Panc1 (cell line): ENCODE measurements at regions of chrX and their contacts with region 1.

Region 1: GRCh38 chrX:129654419-129655165 is at the start of gene APLN:
- DNase-seq: no peak
- ATAC-seq: peak; percentile 82
- H3K4me3 ChIP-seq: peak within 1 kb of the TSS; percentile 46 to 58
- H3K27ac ChIP-seq: no peak within 1 kb of the TSS
- H3K4me1 ChIP-seq: peaks cover 8% of the 10 kb centered on the region
- H3K27me3 ChIP-seq: no peaks in the 10 kb centered on the region
- CTCF ChIP-seq: no peak
- total RNA-seq, gene APLN: 1.1 TPM

Region 2: DNA sequence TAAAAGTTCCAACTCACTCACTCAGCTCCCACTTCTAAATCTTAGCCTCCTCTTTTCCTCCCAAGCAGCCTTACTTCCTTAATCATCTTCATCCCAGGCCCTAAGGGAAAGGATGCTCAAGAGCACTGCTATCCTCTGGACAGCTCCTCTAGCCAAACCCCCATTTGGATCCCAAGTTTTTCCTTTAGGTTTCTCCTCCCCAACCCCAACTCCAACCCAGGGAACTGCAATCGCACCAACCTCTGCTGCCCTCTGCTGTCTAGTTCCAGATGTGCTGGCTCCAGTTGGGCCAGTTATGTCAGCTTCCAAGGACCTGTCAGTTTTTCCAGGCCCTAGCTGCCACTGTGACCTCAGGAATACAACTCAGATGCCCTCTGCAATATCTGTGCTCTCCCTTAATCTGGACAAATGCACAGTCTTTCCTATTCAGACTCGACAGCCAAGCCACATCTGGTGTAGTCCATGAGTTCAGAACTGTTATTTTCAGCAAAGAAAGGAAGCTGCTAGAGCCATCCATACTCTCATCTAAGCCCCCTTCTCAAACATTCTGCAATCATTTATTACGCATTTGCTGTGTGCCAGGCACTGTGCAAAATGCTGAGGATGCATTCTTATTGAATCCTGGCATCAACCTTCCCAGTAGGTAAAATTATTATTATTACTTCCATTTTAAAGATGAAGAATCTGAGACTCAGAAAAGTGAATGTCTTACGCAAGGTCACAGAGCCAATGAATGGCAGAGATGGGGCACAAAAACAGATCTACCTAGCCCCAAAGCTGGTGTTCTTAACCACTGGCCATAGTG is 71.9 kb after region 1 on chrX:
- CTCF ChIA-PET with region 1: interaction called, 12 read pairs
- POLR2A ChIA-PET with region 1: interaction called, 3 read pairs
- in situ Hi-C with region 1: no loop called
- intact Hi-C with region 1: loop called (anchors 1 kb)
- DNase-seq: peak; percentile 63
- ATAC-seq: peak; percentile 93
- H3K4me3 ChIP-seq: no peak overlapping the region
- H3K27ac ChIP-seq: no peak overlapping the region
- H3K4me1 ChIP-seq: no peaks in the 10 kb centered on the region
- H3K27me3 ChIP-seq: no peaks in the 10 kb centered on the region
- CTCF ChIP-seq: peak; percentile 82

Region 3: DNA sequence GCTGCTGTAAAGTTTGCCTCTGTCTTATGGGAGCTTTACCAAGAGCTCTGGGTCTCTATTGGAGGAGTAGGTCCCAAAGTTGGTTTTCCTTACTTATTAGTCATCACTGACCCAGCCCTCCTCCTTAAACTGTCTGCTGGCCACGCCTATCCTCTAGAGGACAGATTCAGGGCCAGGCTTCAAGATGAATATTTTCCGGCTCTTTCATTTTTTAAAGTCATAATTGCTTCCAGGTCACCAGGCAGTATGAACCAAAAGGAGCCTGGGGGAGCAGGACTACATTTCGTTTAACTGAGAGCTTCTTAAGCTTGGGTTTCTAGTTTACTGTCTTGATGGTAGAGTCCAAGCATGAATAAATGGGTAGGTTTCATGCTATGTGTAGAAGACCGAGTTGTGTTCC is 341.5 kb after region 1 on chrX:
- CTCF ChIA-PET with region 1: no interaction called
- POLR2A ChIA-PET with region 1: no interaction called
- in situ Hi-C with region 1: no loop called
- intact Hi-C with region 1: loop called (anchors 2 kb)
- DNase-seq: no peak
- ATAC-seq: peak; percentile 69
- H3K4me3 ChIP-seq: no peak overlapping the region
- H3K27ac ChIP-seq: no peak overlapping the region
- H3K4me1 ChIP-seq: no peaks in the 10 kb centered on the region
- H3K27me3 ChIP-seq: no peaks in the 10 kb centered on the region
- CTCF ChIP-seq: no peak